ENCODE measurements at regions of chr13 and their contacts with region 1.

Region 1: GRCh38 chr13:30408319-30409101 is 13.8 kb upstream of the UBE2L5 start:
- DNase-seq: peak in 1 of 2 donors; percentile 97
- H3K4me3 ChIP-seq: peak overlapping the region; percentile 38 to 46
- H3K27ac ChIP-seq: peak overlapping the region; percentile 92
- H3K4me1 ChIP-seq: peaks cover 36% of the 10 kb centered on the region
- H3K27me3 ChIP-seq: no peaks in the 10 kb centered on the region
- CTCF ChIP-seq: peak; percentile 17 to 85 (median 65)
- POLR2A ChIP-seq: no peak

Region 2: GRCh38 chr13:30253830-30254229 is 154.7 kb before region 1 on chr13:
- intact Hi-C with region 1: no loop called
- DNase-seq: no peak
- H3K4me3 ChIP-seq: no peak overlapping the region
- H3K27ac ChIP-seq: no peak overlapping the region
- H3K4me1 ChIP-seq: peaks cover 13% of the 10 kb centered on the region
- H3K27me3 ChIP-seq: no peaks in the 10 kb centered on the region
- CTCF ChIP-seq: no peak
- POLR2A ChIP-seq: no peak

Region 3: DNA sequence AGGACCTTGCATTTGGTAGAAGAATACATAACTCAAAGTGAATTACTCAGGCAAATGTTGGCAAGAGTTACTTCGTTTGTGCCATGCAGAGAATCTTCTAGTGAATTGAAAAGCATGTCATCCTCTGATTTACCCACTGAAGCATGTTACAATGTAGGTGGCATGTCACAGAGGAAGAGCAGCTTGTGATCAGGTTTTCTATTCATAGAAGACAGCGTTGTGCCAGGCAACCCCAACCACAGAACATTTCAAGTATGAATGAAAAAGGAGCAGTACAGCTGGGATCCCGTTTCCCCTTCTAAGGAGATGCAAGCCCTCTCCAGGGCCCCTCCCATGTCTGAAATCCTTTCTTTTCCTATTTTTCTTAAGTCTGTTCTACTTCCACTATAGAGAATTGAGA is 95.2 kb before region 1 on chr13:
- intact Hi-C with region 1: loop called (anchors 10 kb)
- DNase-seq: no peak
- H3K4me3 ChIP-seq: no peak overlapping the region
- H3K27ac ChIP-seq: no peak overlapping the region
- H3K4me1 ChIP-seq: peaks cover 31% of the 10 kb centered on the region
- H3K27me3 ChIP-seq: no peaks in the 10 kb centered on the region
- CTCF ChIP-seq: no peak
- POLR2A ChIP-seq: no peak

Region 4: GRCh38 chr13:30378191-30378590 is 30.3 kb before region 1 on chr13:
- intact Hi-C with region 1: loop called (anchors 2 kb)
- DNase-seq: no peak
- H3K4me3 ChIP-seq: no peak overlapping the region
- H3K27ac ChIP-seq: peak overlapping the region; percentile 4
- H3K4me1 ChIP-seq: peaks cover 37% of the 10 kb centered on the region
- H3K27me3 ChIP-seq: no peaks in the 10 kb centered on the region
- CTCF ChIP-seq: no peak
- POLR2A ChIP-seq: no peak

Region 5: GRCh38 chr13:30617315-30618185 is 209.0 kb after region 1 on chr13 and contains the start of gene USPL1:
- intact Hi-C with region 1: loop called (anchors 5 kb)
- DNase-seq: peak; percentile 99
- H3K4me3 ChIP-seq: peak within 1 kb of the TSS; percentile 67 to 71
- H3K27ac ChIP-seq: peak within 1 kb of the TSS; percentile 100
- H3K4me1 ChIP-seq: peaks cover 55% of the 10 kb centered on the region
- H3K27me3 ChIP-seq: no peaks in the 10 kb centered on the region
- CTCF ChIP-seq: peak in 2 of 3 experiments; percentile 22 to 67
- POLR2A ChIP-seq: peak; percentile 30 to 98
- total RNA-seq, gene USPL1: 18.4 TPM